Dendritic cell treated with granulocyte-macrophage colony-stimulating factor and Interleukin-4, amounts not matched to agents 40 ng/mL and 50 ng/mL, for 4 days (primary cell): ENCODE measurements at regions of chr18 and their contacts with region 1.

Region 1: GRCh38 chr18:35040988-35041814 is at the start of gene MAPRE2:
- H3K4me3 Mint-ChIP-seq: peak within 1 kb of the TSS; percentile 90
- H3K27ac Mint-ChIP-seq: peak within 1 kb of the TSS; percentile 91
- H3K4me1 Mint-ChIP-seq: peaks cover 72% of the 10 kb centered on the region
- H3K27me3 Mint-ChIP-seq: no peaks in the 10 kb centered on the region

Region 2: GRCh38 chr18:34976899-34977837 is 64.0 kb before region 1 on chr18:
- intact Hi-C with region 1: loop called (anchors 5 kb)
- H3K4me3 Mint-ChIP-seq: peak overlapping the region; percentile 86
- H3K27ac Mint-ChIP-seq: peak overlapping the region; percentile 67
- H3K4me1 Mint-ChIP-seq: peaks cover 35% of the 10 kb centered on the region
- H3K27me3 Mint-ChIP-seq: peaks cover 38% of the 10 kb centered on the region

Region 3: DNA sequence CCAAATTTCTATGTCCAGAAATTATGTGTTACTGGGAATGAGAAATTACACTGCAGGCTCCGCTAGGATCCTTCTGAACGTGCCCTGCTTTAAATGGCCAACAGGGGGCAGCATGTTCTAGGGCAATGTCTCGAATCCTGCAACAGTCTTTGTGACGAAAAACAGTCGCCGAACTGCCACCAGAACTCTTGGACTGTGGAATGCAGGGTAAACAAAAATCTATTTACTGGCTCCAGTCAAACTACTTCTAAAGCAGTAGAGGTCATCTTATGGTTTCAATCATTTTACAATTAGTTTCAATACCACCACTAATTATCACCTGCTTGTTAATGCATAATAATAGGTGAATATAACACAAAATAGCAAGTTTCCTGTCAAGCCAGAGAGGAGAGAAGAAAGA is 189.9 kb after region 1 on chr18:
- intact Hi-C with region 1: loop called (anchors 10 kb)
- H3K4me3 Mint-ChIP-seq: no peak overlapping the region
- H3K27ac Mint-ChIP-seq: no peak overlapping the region
- H3K4me1 Mint-ChIP-seq: peaks cover 4% of the 10 kb centered on the region
- H3K27me3 Mint-ChIP-seq: no peaks in the 10 kb centered on the region

Region 4: GRCh38 chr18:35343936-35344735 is 302.9 kb after region 1 on chr18 and contains the start of gene ZNF24:
- intact Hi-C with region 1: loop called (anchors 5 kb)
- H3K4me3 Mint-ChIP-seq: peak within 1 kb of the TSS; percentile 93
- H3K27ac Mint-ChIP-seq: peak within 1 kb of the TSS; percentile 89
- H3K4me1 Mint-ChIP-seq: peaks cover 49% of the 10 kb centered on the region
- H3K27me3 Mint-ChIP-seq: no peaks in the 10 kb centered on the region

Region 5: GRCh38 chr18:35478520-35479435 is 437.6 kb after region 1 on chr18:
- intact Hi-C with region 1: loop called (anchors 5 kb)
- H3K4me3 Mint-ChIP-seq: no peak overlapping the region
- H3K27ac Mint-ChIP-seq: peak overlapping the region; percentile 84
- H3K4me1 Mint-ChIP-seq: peaks cover 53% of the 10 kb centered on the region
- H3K27me3 Mint-ChIP-seq: no peaks in the 10 kb centered on the region